PC-9 (cell line): ENCODE measurements at regions of chr4 and their contacts with region 1.

Region 1: DNA sequence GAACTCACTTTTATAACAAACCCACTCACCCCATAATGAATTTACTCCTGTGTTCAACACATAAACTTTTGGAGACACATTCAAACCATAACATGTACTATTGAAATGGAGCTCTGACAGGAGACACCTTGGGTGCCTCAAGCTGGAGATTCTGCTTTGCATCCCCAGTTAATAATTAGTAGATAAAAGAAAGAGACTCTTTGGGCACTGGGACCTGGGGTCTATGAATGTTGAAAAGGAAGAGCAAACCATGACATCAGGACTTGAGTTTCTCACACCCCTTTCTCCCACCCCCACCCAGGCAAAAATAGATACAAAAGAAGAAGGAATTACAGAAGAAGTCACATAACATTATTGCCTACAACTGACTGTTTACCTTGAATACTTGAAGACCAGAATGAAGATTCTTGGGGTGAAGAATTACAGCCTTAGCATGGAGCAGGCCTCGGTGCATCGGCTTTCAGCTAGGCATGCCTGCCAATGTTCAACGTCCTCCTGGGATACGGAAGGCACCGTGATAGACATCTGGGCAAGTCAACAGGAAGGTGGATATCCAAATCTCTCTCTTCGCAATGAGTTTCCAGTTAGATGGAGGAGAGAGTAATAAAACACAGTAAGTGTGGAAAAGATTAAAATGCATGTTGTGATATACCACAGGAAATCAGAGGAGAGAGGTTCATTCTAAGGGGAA is 316.0 kb downstream of the TRIML1 start:
- DNase-seq: no peak
- H3K4me3 ChIP-seq: no peak overlapping the region
- H3K27ac ChIP-seq: no peak overlapping the region
- H3K4me1 ChIP-seq: no peaks in the 10 kb centered on the region
- H3K27me3 ChIP-seq: no peaks in the 10 kb centered on the region
- CTCF ChIP-seq: no peak

Region 2: DNA sequence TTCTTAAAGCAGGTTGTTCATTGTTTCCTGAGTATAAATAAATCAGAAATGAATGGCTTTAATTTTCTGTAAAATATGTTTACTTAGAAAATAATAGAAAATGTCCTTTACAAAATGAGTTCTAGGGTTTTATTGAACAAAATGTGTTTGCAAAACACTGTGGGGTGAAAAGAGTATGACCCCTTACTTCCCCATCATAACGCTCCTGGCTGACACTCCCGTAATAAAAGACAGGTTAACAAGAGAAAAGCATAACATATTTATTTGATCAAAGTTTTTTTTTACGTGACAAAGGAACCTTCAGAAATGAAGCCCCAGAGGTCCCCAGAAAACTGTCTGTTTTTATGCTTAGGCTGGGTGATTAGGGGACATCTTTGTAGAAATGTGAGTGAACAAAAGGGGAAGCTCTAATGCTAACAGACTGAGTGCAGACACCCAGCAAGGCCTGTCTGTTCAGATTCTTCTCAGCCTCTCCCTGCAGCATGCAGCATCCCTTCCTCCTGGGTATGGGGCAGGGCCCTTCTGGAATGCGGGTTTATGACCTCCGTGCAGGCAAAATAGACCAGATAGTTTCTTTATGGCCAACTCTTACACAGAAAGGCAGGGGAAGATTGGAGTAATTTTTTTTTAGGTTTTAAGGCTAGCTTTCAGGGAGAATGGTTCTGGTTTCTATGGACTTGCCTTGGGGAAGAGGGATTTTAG is 433.5 kb before region 1 on chr4:
- CTCF ChIA-PET with region 1: no interaction called
- POLR2A ChIA-PET with region 1: no interaction called
- intact Hi-C with region 1: loop called (anchors 10 kb)
- DNase-seq: peak; percentile 77 to 79
- H3K4me3 ChIP-seq: no peak overlapping the region
- H3K27ac ChIP-seq: peak overlapping the region; percentile 70
- H3K4me1 ChIP-seq: peaks cover 12% of the 10 kb centered on the region
- H3K27me3 ChIP-seq: no peaks in the 10 kb centered on the region
- CTCF ChIP-seq: no peak

Region 3: GRCh38 chr4:188346171-188346809 is 108.9 kb before region 1 on chr4:
- CTCF ChIA-PET with region 1: no interaction called
- POLR2A ChIA-PET with region 1: no interaction called
- intact Hi-C with region 1: no loop called
- DNase-seq: no peak
- H3K4me3 ChIP-seq: no peak overlapping the region
- H3K27ac ChIP-seq: no peak overlapping the region
- H3K4me1 ChIP-seq: no peaks in the 10 kb centered on the region
- H3K27me3 ChIP-seq: no peaks in the 10 kb centered on the region
- CTCF ChIP-seq: no peak